B cell (primary cell): ENCODE measurements at regions of chr6 and their contacts with region 1.

Region 1: GRCh38 chr6:14066782-14067406 is 50.7 kb upstream of the CD83 start:
- DNase-seq: peak; percentile 81
- ATAC-seq: peak; percentile 88
- H3K4me3 ChIP-seq: no peak overlapping the region
- H3K4me3 Mint-ChIP-seq: no peak overlapping the region
- H3K27ac ChIP-seq: no peak overlapping the region
- H3K27ac Mint-ChIP-seq: peak overlapping the region; percentile 43
- H3K4me1 ChIP-seq: peaks cover 7 to 9% of the 10 kb centered on the region in 2 donors
- H3K4me1 Mint-ChIP-seq: peaks cover 22% of the 10 kb centered on the region
- H3K27me3 ChIP-seq: no peaks in the 10 kb centered on the region
- H3K27me3 Mint-ChIP-seq: peaks cover 4% of the 10 kb centered on the region
- CTCF ChIP-seq: peak; percentile 74

Region 2: GRCh38 chr6:13814176-13814937 is 252.5 kb before region 1 on chr6 and contains the start of gene MCUR1:
- CTCF ChIA-PET with region 1: interaction called, 5 read pairs
- POLR2A ChIA-PET with region 1: interaction called, 4 read pairs
- intact Hi-C with region 1: loop called (anchors 5 kb)
- DNase-seq: peak; percentile 94
- ATAC-seq: peak; percentile 82
- H3K4me3 ChIP-seq: peak within 1 kb of the TSS; percentile 63 to 88 (median 77)
- H3K4me3 Mint-ChIP-seq: peak within 1 kb of the TSS; percentile 94
- H3K27ac ChIP-seq: peak within 1 kb of the TSS; percentile 68 to 89
- H3K27ac Mint-ChIP-seq: peak within 1 kb of the TSS; percentile 89
- H3K4me1 ChIP-seq: peaks cover 17 to 20% of the 10 kb centered on the region in 2 donors
- H3K4me1 Mint-ChIP-seq: peaks cover 31% of the 10 kb centered on the region
- H3K27me3 ChIP-seq: no peaks in the 10 kb centered on the region
- H3K27me3 Mint-ChIP-seq: no peaks in the 10 kb centered on the region
- CTCF ChIP-seq: peak; percentile 14
- total RNA-seq, gene MCUR1: 10.6 and 11.2 TPM in 2 replicates

Region 3: DNA sequence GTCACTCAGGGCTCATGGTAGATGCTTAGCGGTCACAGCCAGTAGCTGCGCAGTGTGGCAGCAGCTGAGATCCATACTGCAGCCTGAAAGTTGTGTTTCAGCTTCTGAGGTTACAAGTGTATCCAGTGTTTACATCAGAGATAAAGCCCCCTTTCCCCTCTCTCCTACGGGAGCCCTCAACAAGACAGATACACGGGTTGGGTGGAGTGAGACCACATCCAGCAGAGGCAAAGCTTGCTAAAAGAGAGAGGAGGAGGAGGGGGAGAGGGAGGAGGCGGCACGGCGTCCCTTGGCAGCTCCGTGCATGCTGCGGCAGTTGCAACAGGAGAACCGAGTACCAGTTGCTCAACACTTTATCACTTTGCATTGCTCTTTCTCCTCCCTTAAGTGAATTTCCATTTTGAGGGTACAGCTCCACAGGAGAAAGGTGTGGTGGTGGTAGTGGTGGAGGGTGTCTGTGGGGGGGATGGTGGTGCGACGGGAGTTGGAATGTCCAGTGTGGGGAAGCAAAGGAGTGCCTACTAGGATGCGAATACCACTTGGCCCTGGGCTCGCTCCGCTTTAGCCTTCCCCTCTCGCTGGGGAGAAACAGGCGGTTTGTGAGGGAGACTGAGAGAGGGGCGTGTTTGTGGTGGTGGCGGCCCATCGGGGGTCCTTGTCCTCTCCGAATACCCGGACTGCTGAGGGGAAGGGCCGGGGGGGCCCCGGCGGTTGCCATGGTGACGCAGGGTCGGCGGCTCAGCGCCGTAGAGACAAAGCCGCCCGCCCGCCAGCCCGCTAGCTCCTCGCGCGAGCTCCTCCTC is 142.5 kb before region 1 on chr6:
- CTCF ChIA-PET with region 1: interaction called, 21 read pairs
- POLR2A ChIA-PET with region 1: no interaction called
- intact Hi-C with region 1: no loop called
- DNase-seq: peak; percentile 65
- ATAC-seq: peak; percentile 46
- H3K4me3 ChIP-seq: peak overlapping the region; percentile 11 to 65 (median 46)
- H3K4me3 Mint-ChIP-seq: peak overlapping the region; percentile 90
- H3K27ac ChIP-seq: no peak overlapping the region
- H3K27ac Mint-ChIP-seq: peak overlapping the region; percentile 46
- H3K4me1 ChIP-seq: peaks cover 15 to 22% of the 10 kb centered on the region in 2 donors
- H3K4me1 Mint-ChIP-seq: peaks cover 13% of the 10 kb centered on the region
- H3K27me3 ChIP-seq: peaks cover 0 to 52% (median 41%) of the 10 kb centered on the region in 4 experiments
- H3K27me3 Mint-ChIP-seq: peaks cover 59% of the 10 kb centered on the region
- CTCF ChIP-seq: no peak

Region 4: DNA sequence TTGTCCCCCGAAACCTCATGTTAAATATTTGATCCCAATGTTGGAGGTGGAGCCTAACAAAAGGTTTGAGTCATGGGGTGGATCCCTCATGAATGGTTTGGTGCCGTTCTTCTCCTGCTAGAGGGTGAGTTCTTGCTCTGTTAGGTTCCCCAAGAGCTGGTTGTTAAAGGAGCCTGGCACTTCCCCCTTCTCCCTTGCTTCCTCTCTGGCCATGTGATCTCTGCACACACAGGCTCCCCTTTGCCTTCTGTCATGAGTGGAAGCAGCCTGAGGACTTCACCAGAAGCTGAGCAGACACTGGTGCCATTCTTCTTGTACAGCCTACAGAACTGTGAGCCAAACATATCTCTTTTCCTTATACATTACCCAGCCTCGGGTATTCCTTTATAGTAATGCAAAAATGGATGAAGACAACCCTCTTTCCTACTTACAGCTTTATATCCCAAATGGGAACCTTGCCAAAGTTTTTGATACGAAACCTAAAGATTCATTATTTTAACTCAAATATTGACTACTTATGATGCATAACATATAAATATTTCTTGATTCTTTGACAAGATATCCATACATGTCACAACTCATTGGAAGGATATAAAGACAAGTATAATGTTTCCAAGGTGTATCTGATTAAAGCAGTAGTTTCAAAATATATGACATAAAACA is 81.1 kb before region 1 on chr6:
- CTCF ChIA-PET with region 1: no interaction called
- POLR2A ChIA-PET with region 1: no interaction called
- intact Hi-C with region 1: no loop called
- DNase-seq: no peak
- ATAC-seq: no peak
- H3K4me3 ChIP-seq: no peak overlapping the region
- H3K4me3 Mint-ChIP-seq: no peak overlapping the region
- H3K27ac ChIP-seq: no peak overlapping the region
- H3K27ac Mint-ChIP-seq: no peak overlapping the region
- H3K4me1 ChIP-seq: no peaks in the 10 kb centered on the region
- H3K4me1 Mint-ChIP-seq: no peaks in the 10 kb centered on the region
- H3K27me3 ChIP-seq: peaks cover 0 to 10% (median 4%) of the 10 kb centered on the region in 4 experiments
- H3K27me3 Mint-ChIP-seq: peaks cover 50% of the 10 kb centered on the region
- CTCF ChIP-seq: no peak

Region 5: GRCh38 chr6:14055541-14055940 is 11.4 kb before region 1 on chr6:
- CTCF ChIA-PET with region 1: interaction called, 21 read pairs
- POLR2A ChIA-PET with region 1: no interaction called
- intact Hi-C with region 1: no loop called
- DNase-seq: no peak
- ATAC-seq: no peak
- H3K4me3 ChIP-seq: no peak overlapping the region
- H3K4me3 Mint-ChIP-seq: no peak overlapping the region
- H3K27ac ChIP-seq: no peak overlapping the region
- H3K27ac Mint-ChIP-seq: no peak overlapping the region
- H3K4me1 ChIP-seq: no peaks in the 10 kb centered on the region
- H3K4me1 Mint-ChIP-seq: no peaks in the 10 kb centered on the region
- H3K27me3 ChIP-seq: no peaks in the 10 kb centered on the region
- H3K27me3 Mint-ChIP-seq: peaks cover 12% of the 10 kb centered on the region
- CTCF ChIP-seq: no peak

Region 6: GRCh38 chr6:14108571-14109410 is 41.9 kb after region 1 on chr6:
- CTCF ChIA-PET with region 1: interaction called, 37 read pairs
- POLR2A ChIA-PET with region 1: interaction called, 7 read pairs
- intact Hi-C with region 1: no loop called
- DNase-seq: peak; percentile 95
- ATAC-seq: peak; percentile 81
- H3K4me3 ChIP-seq: peak overlapping the region in 3 of 5 experiments; percentile 26 to 55 (median 40)
- H3K4me3 Mint-ChIP-seq: peak overlapping the region; percentile 85
- H3K27ac ChIP-seq: peak overlapping the region; percentile 93 to 99
- H3K27ac Mint-ChIP-seq: peak overlapping the region; percentile 96
- H3K4me1 ChIP-seq: peaks cover 45 to 50% of the 10 kb centered on the region in 2 donors
- H3K4me1 Mint-ChIP-seq: peaks cover 64% of the 10 kb centered on the region
- H3K27me3 ChIP-seq: no peaks in the 10 kb centered on the region
- H3K27me3 Mint-ChIP-seq: no peaks in the 10 kb centered on the region
- CTCF ChIP-seq: no peak

Region 7: DNA sequence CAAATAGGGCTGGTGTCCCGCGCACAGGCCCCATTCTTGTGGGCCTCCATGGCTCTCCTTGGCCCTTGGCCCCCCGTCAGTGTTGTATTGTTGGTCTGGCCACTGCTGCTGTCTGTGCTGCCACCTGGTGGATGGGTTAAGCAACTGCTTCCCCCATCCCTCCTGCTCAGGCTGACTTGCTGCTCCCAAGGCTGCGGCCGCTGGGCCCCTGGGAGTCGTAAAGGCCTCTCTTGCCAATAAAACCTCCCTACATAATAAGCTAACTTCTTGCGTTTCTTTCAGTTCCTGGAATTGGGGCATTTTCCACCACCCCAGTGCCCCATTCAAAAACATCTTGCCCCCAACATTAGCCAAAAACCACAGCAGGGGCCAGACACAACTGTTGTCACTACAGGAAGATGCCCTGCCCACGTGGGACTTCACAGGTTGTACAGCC is 77.8 kb after region 1 on chr6:
- CTCF ChIA-PET with region 1: interaction called, 77 read pairs
- POLR2A ChIA-PET with region 1: no interaction called
- intact Hi-C with region 1: loop called (anchors 2 kb)
- DNase-seq: peak; percentile 85
- ATAC-seq: peak; percentile 83
- H3K4me3 ChIP-seq: no peak overlapping the region
- H3K4me3 Mint-ChIP-seq: no peak overlapping the region
- H3K27ac ChIP-seq: no peak overlapping the region
- H3K27ac Mint-ChIP-seq: peak overlapping the region; percentile 8
- H3K4me1 ChIP-seq: peaks cover 17 to 18% of the 10 kb centered on the region in 2 donors
- H3K4me1 Mint-ChIP-seq: peaks cover 59% of the 10 kb centered on the region
- H3K27me3 ChIP-seq: no peaks in the 10 kb centered on the region
- H3K27me3 Mint-ChIP-seq: no peaks in the 10 kb centered on the region
- CTCF ChIP-seq: peak; percentile 91